CD4-positive, alpha-beta T cell (primary cell): ENCODE measurements at regions of chr16 and their contacts with region 1.

Region 1: GRCh38 chr16:2155091-2156021 is at the start of gene TRAF7:
- DNase-seq: peak; percentile 93 to 100 (median 95)
- ATAC-seq: peak; percentile 90
- H3K4me3 ChIP-seq: peak within 1 kb of the TSS; percentile 83
- H3K4me3 Mint-ChIP-seq: peak within 1 kb of the TSS; percentile 94
- H3K27ac ChIP-seq: peak within 1 kb of the TSS; percentile 64 to 68
- H3K27ac Mint-ChIP-seq: peak within 1 kb of the TSS; percentile 75
- H3K4me1 ChIP-seq: peaks cover 79% of the 10 kb centered on the region
- H3K4me1 Mint-ChIP-seq: peaks cover 51% of the 10 kb centered on the region
- H3K27me3 ChIP-seq: no peaks in the 10 kb centered on the region
- H3K27me3 Mint-ChIP-seq: no peaks in the 10 kb centered on the region
- CTCF ChIP-seq: no peak
- total RNA-seq, gene TRAF7: 19.9 to 24.0 TPM

Region 2: DNA sequence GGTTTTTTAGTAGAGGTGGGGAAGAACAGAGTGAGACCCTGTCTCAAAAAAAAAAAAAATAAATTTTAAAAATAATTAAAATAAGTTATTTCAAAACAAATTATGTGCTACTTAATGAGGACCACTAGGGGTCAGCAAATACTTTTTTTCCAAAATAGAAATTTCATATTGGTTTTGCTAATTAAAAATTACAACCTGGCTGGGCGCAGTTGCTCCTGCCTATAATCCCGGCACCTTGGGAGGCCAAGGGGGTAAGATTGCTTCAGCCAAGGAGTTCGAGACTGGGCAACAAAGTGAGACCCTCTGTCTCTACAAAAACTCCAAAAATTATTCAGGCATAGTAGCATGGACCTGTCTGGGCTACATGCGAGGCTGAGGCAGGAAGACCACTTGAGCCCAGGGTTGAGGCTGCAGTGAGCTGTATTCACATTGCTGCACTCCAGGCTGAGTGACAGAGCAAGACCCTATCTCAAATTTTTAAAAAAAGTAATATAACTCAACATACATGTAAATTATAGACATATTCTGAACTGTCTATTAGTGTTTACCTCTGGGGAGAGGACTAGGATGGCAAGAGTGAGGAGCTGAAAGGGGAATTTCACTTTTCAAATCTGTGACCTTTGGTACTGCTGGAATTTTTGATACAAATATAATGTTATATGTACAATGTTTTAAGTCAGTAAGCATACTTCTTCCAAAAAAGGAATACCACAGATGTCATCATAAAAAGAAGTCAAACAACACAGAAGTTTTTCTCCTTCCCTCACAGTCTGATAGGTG is 291.5 kb before region 1 on chr16:
- CTCF ChIA-PET with region 1: no interaction called
- POLR2A ChIA-PET with region 1: no interaction called
- intact Hi-C with region 1: loop called (anchors 5 to 10 kb)
- DNase-seq: peak in 4 of 14 experiments; percentile 4 to 67 (median 52)
- ATAC-seq: peak; percentile 34
- H3K4me3 ChIP-seq: no peak overlapping the region
- H3K4me3 Mint-ChIP-seq: no peak overlapping the region
- H3K27ac ChIP-seq: no peak overlapping the region
- H3K27ac Mint-ChIP-seq: no peak overlapping the region
- H3K4me1 ChIP-seq: no peaks in the 10 kb centered on the region
- H3K4me1 Mint-ChIP-seq: no peaks in the 10 kb centered on the region
- H3K27me3 ChIP-seq: peaks cover 0 to 8% of the 10 kb centered on the region in 2 experiments
- H3K27me3 Mint-ChIP-seq: peaks cover 47% of the 10 kb centered on the region
- CTCF ChIP-seq: peak; percentile 71

Region 3: DNA sequence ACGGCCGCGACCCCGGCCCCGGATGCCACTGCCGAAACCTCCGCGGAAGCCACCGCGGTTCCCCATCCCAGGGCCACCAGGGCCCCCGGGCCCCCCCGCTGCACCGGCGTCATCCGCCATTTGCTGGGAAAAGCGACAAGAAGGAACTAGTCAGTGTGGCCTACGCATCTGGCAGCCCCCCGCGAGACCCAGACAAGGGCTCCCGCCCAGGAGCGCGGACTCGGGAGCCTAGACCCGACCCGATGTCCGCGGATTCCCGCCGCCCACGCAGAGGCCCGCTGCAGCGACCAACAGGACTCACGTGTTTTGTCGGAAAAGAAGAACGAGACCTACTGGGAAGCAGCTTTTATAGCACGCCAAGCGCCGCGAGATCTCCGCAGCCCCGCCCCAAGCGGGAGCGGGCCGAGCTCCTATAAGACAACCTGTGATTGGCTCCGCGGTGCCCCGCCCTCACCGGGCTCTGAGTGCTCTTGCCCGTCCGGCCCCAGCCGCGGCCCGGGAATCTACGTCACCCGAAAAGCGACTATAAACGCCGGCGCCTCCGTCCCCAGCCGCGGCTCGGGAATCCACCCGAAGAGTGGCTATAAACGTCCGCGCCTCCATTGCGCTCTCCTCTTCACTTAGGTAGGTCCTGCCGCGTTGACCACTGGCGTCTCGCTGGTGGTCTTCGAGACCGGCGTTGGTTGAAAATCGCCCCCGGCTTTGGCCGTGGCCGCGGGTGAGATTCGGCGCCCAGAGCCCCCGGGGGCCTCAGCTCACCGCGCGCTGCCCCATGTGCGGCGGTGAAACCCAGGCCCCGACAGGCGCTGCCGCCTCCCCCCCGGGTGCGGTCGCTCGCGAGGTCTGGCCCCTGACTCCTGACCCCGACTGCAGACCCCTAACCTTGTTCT is 190.6 kb before region 1 on chr16 and contains the start of gene RPS2:
- CTCF ChIA-PET with region 1: interaction called, 4 read pairs
- POLR2A ChIA-PET with region 1: interaction called, 41 read pairs
- intact Hi-C with region 1: loop called in 1 of 2 experiments (anchors 1 kb)
- DNase-seq: peak; percentile 96 to 100 (median 98)
- ATAC-seq: peak; percentile 89
- H3K4me3 ChIP-seq: peak within 1 kb of the TSS; percentile 91
- H3K4me3 Mint-ChIP-seq: peak within 1 kb of the TSS; percentile 98
- H3K27ac ChIP-seq: peak within 1 kb of the TSS; percentile 96 to 99
- H3K27ac Mint-ChIP-seq: peak within 1 kb of the TSS; percentile 98
- H3K4me1 ChIP-seq: peaks cover 58% of the 10 kb centered on the region
- H3K4me1 Mint-ChIP-seq: peaks cover 50% of the 10 kb centered on the region
- H3K27me3 ChIP-seq: no peaks in the 10 kb centered on the region
- H3K27me3 Mint-ChIP-seq: no peaks in the 10 kb centered on the region
- CTCF ChIP-seq: no peak
- total RNA-seq, gene RPS2: 3,604 to 3,755 TPM

Region 4: GRCh38 chr16:2003827-2004641 is 151.3 kb before region 1 on chr16:
- CTCF ChIA-PET with region 1: interaction called, 7 read pairs
- POLR2A ChIA-PET with region 1: interaction called, 30 read pairs
- intact Hi-C with region 1: no loop called
- DNase-seq: peak; percentile 78 to 92 (median 84)
- ATAC-seq: peak; percentile 98
- H3K4me3 ChIP-seq: no peak overlapping the region
- H3K4me3 Mint-ChIP-seq: no peak overlapping the region
- H3K27ac ChIP-seq: no peak overlapping the region
- H3K27ac Mint-ChIP-seq: no peak overlapping the region
- H3K4me1 ChIP-seq: peaks cover 57% of the 10 kb centered on the region
- H3K4me1 Mint-ChIP-seq: peaks cover 32% of the 10 kb centered on the region
- H3K27me3 ChIP-seq: no peaks in the 10 kb centered on the region
- H3K27me3 Mint-ChIP-seq: no peaks in the 10 kb centered on the region
- CTCF ChIP-seq: peak; percentile 78

Region 5: GRCh38 chr16:2035431-2036220 is 119.7 kb before region 1 on chr16:
- CTCF ChIA-PET with region 1: no interaction called
- POLR2A ChIA-PET with region 1: no interaction called
- intact Hi-C with region 1: no loop called
- DNase-seq: no peak
- ATAC-seq: no peak
- H3K4me3 ChIP-seq: no peak overlapping the region
- H3K4me3 Mint-ChIP-seq: no peak overlapping the region
- H3K27ac ChIP-seq: no peak overlapping the region
- H3K27ac Mint-ChIP-seq: no peak overlapping the region
- H3K4me1 ChIP-seq: peaks cover 7% of the 10 kb centered on the region
- H3K4me1 Mint-ChIP-seq: no peaks in the 10 kb centered on the region
- H3K27me3 ChIP-seq: no peaks in the 10 kb centered on the region
- H3K27me3 Mint-ChIP-seq: no peaks in the 10 kb centered on the region
- CTCF ChIP-seq: no peak

Region 6: DNA sequence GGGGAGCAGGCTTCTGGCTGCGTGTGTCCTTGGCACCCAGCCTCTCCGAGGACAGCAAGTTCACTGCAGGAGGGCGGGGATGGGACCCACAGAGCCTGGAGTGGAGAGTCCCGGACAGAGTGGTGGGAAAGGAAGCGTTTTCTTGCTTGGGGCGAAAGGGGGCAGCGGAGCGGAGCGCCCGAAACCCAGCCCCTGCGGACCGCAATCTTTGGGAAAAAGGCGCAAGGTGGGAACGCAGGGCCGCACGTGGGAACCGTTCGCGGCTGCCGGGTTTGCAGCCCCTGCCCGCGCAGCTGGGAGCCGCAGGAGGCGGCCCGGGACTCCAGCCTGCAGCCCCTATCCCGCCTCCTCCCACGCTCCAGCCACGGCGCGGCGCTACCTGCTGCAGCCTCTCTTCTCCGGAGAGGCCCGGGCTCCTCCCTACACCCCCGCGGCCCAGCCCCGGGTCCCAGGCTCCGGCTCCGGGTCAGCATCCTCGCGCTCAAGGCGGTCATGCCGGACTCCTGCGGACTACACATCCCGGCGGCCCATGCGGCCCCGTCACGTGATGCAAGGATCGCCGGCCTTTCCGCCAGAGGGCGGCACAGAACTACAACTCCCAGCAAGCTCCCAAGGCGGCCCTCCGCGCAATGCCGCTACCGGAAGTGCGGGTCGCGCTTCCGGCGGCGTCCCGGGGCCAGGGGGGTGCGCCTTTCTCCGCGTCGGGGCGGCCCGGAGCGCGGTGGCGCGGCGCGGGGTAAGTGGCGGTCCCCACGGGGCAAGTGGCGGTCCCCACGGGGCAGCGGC is 107.8 kb before region 1 on chr16 and contains the starts of genes NTHL1 and TSC2:
- CTCF ChIA-PET with region 1: interaction called, 10 read pairs
- POLR2A ChIA-PET with region 1: interaction called, 32 read pairs
- intact Hi-C with region 1: loop called in 1 of 2 experiments (anchors 1 kb)
- DNase-seq: peak; percentile 78 to 96 (median 90)
- ATAC-seq: peak; percentile 90
- H3K4me3 ChIP-seq: peak within 1 kb of the TSS; percentile 96
- H3K4me3 Mint-ChIP-seq: peak within 1 kb of the TSS; percentile 93
- H3K27ac ChIP-seq: peak within 1 kb of the TSS in 1 of 2 donors; percentile 29
- H3K27ac Mint-ChIP-seq: peak within 1 kb of the TSS; percentile 56
- H3K4me1 ChIP-seq: peaks cover 33% of the 10 kb centered on the region
- H3K4me1 Mint-ChIP-seq: peaks cover 23% of the 10 kb centered on the region
- H3K27me3 ChIP-seq: no peaks in the 10 kb centered on the region
- H3K27me3 Mint-ChIP-seq: no peaks in the 10 kb centered on the region
- CTCF ChIP-seq: peak; percentile 57
- total RNA-seq, gene NTHL1: 2.7 to 2.9 TPM
- total RNA-seq, gene TSC2: 83.0 to 85.0 TPM

Region 7: DNA sequence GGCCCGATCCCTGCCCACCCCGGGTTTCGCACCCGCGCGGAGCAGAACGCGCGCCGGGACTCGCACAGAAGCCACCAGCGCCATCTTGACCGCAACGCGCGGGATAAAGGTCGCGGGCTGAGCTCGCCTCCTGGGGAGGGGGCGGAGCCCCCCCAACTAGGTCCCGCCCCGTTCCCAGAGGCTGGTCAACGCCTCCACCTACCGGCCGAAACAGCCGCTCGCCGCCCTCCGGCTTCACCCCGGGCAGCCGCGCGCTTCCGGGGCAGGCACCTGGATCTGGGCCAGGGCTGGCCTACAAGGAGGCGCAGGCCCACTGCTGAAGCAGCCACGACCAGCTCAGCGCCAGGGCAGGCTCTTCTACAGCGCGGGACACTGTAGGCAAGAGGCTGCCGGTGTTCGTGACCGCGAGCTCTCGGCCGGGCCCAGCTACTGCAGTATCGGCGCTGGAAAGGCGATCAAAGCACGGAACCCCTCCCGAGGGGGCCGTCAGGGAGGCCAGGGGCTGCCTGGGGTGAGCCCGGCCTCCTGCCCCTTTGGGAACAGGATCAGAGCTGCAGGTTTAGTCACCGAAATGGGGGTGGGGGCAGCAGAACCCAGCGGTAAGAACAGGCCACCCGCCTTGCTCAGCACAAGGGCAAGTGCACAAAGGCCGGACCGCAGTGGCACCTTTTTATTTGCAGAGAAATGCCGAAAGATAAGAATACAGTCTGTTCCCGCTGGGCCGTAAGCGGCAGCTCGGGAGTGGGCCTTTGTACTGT is 96.3 kb after region 1 on chr16 and contains the start of gene ECI1:
- CTCF ChIA-PET with region 1: interaction called, 3 read pairs
- POLR2A ChIA-PET with region 1: interaction called, 18 read pairs
- intact Hi-C with region 1: no loop called
- DNase-seq: peak; percentile 54 to 92 (median 75)
- ATAC-seq: peak; percentile 68
- H3K4me3 ChIP-seq: peak within 1 kb of the TSS; percentile 66
- H3K4me3 Mint-ChIP-seq: peak within 1 kb of the TSS; percentile 92
- H3K27ac ChIP-seq: peak within 1 kb of the TSS; percentile 53 to 80
- H3K27ac Mint-ChIP-seq: peak within 1 kb of the TSS; percentile 93
- H3K4me1 ChIP-seq: peaks cover 19% of the 10 kb centered on the region
- H3K4me1 Mint-ChIP-seq: peaks cover 11% of the 10 kb centered on the region
- H3K27me3 ChIP-seq: no peaks in the 10 kb centered on the region
- H3K27me3 Mint-ChIP-seq: no peaks in the 10 kb centered on the region
- CTCF ChIP-seq: peak; percentile 44
- total RNA-seq, gene ECI1: 10.1 to 12.5 TPM

Region 8: GRCh38 chr16:2319606-2320005 is 164.2 kb after region 1 on chr16:
- CTCF ChIA-PET with region 1: no interaction called
- POLR2A ChIA-PET with region 1: no interaction called
- intact Hi-C with region 1: no loop called
- DNase-seq: no peak
- ATAC-seq: no peak
- H3K4me3 ChIP-seq: no peak overlapping the region
- H3K4me3 Mint-ChIP-seq: no peak overlapping the region
- H3K27ac ChIP-seq: no peak overlapping the region
- H3K27ac Mint-ChIP-seq: no peak overlapping the region
- H3K4me1 ChIP-seq: no peaks in the 10 kb centered on the region
- H3K4me1 Mint-ChIP-seq: no peaks in the 10 kb centered on the region
- H3K27me3 ChIP-seq: no peaks in the 10 kb centered on the region
- H3K27me3 Mint-ChIP-seq: no peaks in the 10 kb centered on the region
- CTCF ChIP-seq: no peak

Region 9: GRCh38 chr16:2473999-2474876 is 318.9 kb after region 1 on chr16:
- CTCF ChIA-PET with region 1: no interaction called
- POLR2A ChIA-PET with region 1: no interaction called
- intact Hi-C with region 1: no loop called
- DNase-seq: peak; percentile 36 to 88 (median 58)
- ATAC-seq: peak; percentile 82
- H3K4me3 ChIP-seq: peak overlapping the region; percentile 60
- H3K4me3 Mint-ChIP-seq: peak overlapping the region; percentile 62
- H3K27ac ChIP-seq: no peak overlapping the region
- H3K27ac Mint-ChIP-seq: no peak overlapping the region
- H3K4me1 ChIP-seq: peaks cover 37% of the 10 kb centered on the region
- H3K4me1 Mint-ChIP-seq: peaks cover 13% of the 10 kb centered on the region
- H3K27me3 ChIP-seq: peaks cover 32 to 41% of the 10 kb centered on the region in 2 experiments
- H3K27me3 Mint-ChIP-seq: peaks cover 23% of the 10 kb centered on the region
- CTCF ChIP-seq: peak; percentile 29